Activated naive CD4-positive, alpha-beta T cell treated with anti-CD3 and anti-CD28 coated beads, Interleukin-2, amount 10 ng/mL, durations not matched to agents 7 days and 5 days (primary cell): ENCODE measurements at regions of chr5 and their contacts with region 1.

Region 1: DNA sequence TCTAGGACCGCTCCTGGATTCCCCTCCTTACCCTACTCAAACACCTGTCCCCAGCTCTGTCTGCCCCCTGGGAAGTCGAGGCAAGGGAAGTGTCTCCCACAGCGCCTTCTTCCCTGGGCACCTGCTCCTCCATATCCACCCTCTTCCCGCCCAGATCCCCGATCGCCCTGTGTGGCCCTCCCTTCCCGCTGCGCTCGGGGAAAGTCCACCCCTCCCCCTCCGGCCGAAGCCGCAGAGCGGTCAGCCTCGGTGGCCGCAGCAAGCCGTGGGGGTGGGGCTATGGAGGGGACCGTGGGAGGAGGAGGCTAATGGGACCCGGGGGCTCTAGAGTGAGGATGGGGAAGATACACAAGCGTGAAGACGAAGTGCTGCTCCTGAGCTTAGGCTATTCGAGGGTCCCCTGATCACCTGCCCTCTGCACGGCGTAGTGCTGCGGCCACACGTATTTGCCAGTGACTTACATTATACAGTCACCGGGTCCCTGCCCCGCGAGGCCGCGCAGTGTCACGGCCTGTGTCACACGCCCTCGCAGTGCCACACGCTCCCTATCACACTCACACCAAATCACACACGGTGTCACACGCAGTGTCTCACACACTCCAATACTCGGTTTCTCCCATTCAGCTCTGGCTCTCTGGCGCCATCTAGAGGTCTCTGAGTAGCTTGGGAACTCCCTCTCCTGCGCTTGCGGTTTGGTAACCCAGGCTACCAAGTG is 658 bp upstream of the PCDH1 start:
- DNase-seq: peak; percentile 92
- H3K4me3 Mint-ChIP-seq: peak overlapping the region; percentile 48
- H3K27ac Mint-ChIP-seq: no peak overlapping the region
- H3K4me1 Mint-ChIP-seq: peaks cover 22% of the 10 kb centered on the region
- H3K27me3 Mint-ChIP-seq: peaks cover 99% of the 10 kb centered on the region

Region 2: DNA sequence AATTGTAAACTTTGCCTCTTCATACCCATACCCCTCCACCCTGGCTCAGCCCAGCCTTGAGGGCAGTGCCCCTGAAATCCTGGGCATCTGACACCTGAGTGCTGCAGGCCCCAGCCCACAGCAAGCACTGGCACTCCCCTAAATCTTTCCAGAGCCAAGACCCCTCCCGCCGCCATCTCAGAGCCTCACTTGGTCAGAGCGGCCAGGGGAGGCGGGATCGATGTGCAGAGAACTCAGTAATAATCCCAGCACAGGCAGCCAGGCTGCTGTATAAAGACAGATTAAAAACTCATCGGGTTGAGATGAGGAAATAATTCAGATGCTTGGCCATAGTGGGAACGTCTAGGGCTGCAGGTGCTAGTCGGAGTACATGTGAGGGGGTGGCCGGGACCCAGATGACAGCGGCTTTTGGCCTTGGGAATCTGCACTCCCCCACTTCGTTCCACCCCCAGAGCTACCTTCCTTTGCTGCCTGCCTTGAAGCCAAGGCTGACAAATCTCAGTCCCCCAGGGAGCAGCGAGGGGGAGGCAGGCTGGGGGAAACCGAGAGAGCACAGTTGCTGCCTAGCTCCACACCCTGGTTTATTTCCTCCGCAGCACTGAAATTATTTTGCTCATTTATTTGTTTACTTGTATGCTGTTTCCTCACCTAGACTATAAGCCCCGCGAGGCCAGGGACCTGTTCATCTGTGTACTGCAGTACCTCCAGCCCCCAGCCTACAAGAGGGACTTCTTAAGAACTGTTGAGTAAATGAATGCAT is 177.3 kb before region 1 on chr5:
- CTCF ChIA-PET with region 1: interaction called, 157 read pairs
- DNase-seq: no peak
- H3K4me3 Mint-ChIP-seq: peak overlapping the region; percentile 70
- H3K27ac Mint-ChIP-seq: no peak overlapping the region
- H3K4me1 Mint-ChIP-seq: peaks cover 22% of the 10 kb centered on the region
- H3K27me3 Mint-ChIP-seq: peaks cover 40% of the 10 kb centered on the region

Region 3: DNA sequence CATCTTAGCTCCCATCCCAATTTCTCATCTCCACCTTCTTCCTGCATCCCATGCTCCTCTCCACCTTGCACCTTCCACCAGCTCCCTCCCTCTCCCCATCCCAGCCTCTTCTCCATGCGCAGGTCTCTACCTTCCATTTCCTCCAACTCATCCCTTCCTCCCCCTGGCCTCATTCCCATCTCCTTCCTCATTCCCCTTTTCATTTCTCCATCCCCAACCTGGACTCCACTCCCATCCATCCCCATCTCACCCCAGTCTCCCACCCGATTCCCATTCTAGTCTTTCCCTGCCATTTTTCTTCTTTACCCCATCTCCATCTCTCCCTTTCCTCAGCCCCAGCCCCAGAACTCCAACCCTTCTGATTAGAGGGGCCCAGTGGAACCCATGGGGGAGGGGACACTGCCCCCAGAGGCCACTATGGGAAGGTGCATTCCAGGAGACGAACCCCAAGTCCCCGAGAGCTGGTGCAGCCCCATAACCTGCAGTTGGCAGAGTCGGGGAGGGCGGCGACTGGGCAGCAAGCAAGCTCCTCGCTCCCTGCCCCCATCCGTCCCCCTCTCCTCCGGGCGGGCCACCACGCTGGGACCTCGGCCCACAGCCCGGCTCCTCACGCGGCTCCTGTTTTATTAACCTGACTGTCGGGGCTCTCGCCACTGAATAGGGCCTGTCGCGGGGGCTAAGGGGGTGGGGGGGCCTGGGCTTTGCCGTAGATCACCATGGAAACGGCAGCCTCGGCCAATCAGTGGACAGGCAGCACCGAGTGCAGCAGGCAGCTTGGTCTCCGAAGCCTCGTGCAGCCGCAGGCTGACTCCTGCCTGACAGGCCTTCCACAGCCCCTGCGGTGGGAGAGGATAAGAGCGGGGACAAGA is 67.3 kb before region 1 on chr5:
- CTCF ChIA-PET with region 1: interaction called, 12 read pairs
- DNase-seq: peak; percentile 45
- H3K4me3 Mint-ChIP-seq: no peak overlapping the region
- H3K27ac Mint-ChIP-seq: no peak overlapping the region
- H3K4me1 Mint-ChIP-seq: no peaks in the 10 kb centered on the region
- H3K27me3 Mint-ChIP-seq: peaks cover 89% of the 10 kb centered on the region

Region 4: GRCh38 chr5:141889282-141889871 is 10.5 kb after region 1 on chr5:
- CTCF ChIA-PET with region 1: interaction called, 32 read pairs
- DNase-seq: no peak
- H3K4me3 Mint-ChIP-seq: no peak overlapping the region
- H3K27ac Mint-ChIP-seq: no peak overlapping the region
- H3K4me1 Mint-ChIP-seq: peaks cover 2% of the 10 kb centered on the region
- H3K27me3 Mint-ChIP-seq: peaks cover 41% of the 10 kb centered on the region

Region 5: GRCh38 chr5:142133330-142134206 is 254.7 kb after region 1 on chr5:
- CTCF ChIA-PET with region 1: no interaction called
- DNase-seq: no peak
- H3K4me3 Mint-ChIP-seq: no peak overlapping the region
- H3K27ac Mint-ChIP-seq: no peak overlapping the region
- H3K4me1 Mint-ChIP-seq: peaks cover 33% of the 10 kb centered on the region
- H3K27me3 Mint-ChIP-seq: no peaks in the 10 kb centered on the region